IMR-90 (cell line): ENCODE measurements at regions of chr5 and their contacts with region 1.

Region 1: DNA sequence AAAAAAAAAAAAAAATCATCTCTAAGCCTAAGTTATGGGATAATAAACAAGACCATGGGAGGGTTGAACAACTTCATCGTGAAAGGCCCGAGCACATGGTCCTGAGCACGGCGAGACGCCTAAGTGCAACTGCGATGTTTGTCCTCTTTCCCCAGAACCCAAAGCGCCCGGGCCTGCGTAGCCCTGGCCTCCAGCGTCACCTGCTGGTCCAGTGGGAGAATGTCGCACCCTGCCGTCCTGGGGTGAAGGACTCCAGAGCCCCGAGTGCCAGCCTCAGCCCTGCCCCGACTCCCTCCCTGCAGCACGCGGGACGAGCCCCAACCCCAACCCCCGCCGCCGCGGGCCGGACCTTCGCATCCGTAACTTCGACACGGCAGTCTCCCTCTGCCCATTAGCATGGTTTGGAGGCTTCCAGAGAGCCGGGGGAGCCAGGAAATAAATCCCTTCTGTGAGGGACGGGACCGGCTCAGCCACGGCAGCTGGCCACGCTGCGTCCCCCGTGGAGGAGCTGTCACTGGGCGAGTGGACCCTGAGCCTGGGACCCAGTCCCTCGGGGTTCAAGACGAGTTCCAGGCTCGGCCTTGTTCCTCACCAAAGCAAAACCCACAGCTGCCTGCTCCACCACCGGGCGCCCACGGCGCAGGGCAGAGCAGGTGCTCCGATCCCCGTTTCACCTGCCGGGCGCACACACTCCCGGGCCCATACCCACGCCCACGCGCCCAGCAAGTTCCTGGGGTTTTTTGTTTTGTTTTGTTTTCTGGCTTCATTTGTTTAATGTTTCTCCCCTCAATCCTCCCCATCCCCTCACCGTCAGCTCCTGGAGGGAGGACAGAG is 132.5 kb upstream of the HAND1 start:
- DNase-seq: peak; percentile 59
- ATAC-seq: peak; percentile 99
- H3K4me3 ChIP-seq: peak overlapping the region; percentile 4; the same call in 1 of the 2 replicates
- H3K27ac ChIP-seq: no peak overlapping the region
- H3K4me1 ChIP-seq: peaks cover 3% of the 10 kb centered on the region; the same call in 1 of the 2 replicates
- H3K27me3 ChIP-seq: peaks cover 60% of the 10 kb centered on the region
- CTCF ChIP-seq: peak; percentile 96
- POLR2A ChIP-seq: peak; percentile 39; the same call in 1 of the 2 replicates
- RAD21 ChIP-seq: peak; percentile 99

Region 2: DNA sequence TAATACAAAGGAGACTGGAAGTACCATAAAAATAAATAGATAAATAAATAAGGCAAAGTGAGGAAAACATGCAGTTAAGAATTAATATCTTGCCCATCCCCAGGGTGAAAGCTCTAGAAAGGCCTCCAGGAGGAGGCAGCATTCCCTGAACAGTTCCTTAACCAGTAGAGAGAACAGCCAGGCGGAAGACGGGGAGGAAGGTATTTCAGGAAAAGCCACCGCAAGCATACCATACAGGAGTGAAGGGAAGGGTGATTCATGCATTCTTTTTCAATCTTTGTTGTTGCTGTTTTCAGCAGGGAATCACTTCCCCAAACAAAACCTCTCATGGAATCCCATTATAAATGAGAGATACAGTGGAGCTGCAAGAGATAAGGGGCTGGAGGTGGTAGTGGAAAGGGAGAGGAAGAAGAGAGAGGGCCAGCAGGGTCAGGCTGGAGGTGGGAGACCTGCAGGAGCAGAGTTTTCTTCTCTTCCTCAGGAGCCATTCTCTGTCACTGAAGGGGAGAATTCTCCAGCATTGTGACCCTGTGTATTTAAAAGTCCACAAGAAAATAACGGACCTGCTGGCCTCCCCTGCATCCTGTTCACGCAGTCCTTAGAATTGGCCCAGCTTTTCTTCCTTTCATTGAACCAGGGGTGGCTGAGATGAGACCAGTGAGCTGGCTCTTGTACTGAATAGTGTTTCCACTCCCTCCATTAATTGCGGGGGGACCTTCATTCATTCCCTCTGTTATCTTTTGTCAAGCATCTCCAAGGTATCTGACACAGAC is 827.8 kb before region 1 on chr5:
- CTCF ChIA-PET with region 1: no interaction called
- POLR2A ChIA-PET with region 1: no interaction called
- dilution Hi-C with region 1: no loop called
- in situ Hi-C with region 1: no loop called
- intact Hi-C with region 1: no loop called
- DNase-seq: peak; percentile 6
- ATAC-seq: peak; percentile 35
- H3K4me3 ChIP-seq: no peak overlapping the region
- H3K27ac ChIP-seq: no peak overlapping the region
- H3K4me1 ChIP-seq: no peaks in the 10 kb centered on the region; the same call in 1 of the 2 replicates
- H3K27me3 ChIP-seq: no peaks in the 10 kb centered on the region
- CTCF ChIP-seq: 0 out of 2 replicates have a peak, but pooled peaks have one; percentile 21
- POLR2A ChIP-seq: no peak
- RAD21 ChIP-seq: no peak

Region 3: GRCh38 chr5:154467655-154468354 is 142.7 kb before region 1 on chr5:
- CTCF ChIA-PET with region 1: interaction called, 3 read pairs
- POLR2A ChIA-PET with region 1: no interaction called
- dilution Hi-C with region 1: no loop called
- in situ Hi-C with region 1: loop called (anchors 5 kb)
- intact Hi-C with region 1: loop called (anchors 1 kb)
- DNase-seq: peak; percentile 53
- ATAC-seq: peak; percentile 92
- H3K4me3 ChIP-seq: no peak overlapping the region
- H3K27ac ChIP-seq: no peak overlapping the region
- H3K4me1 ChIP-seq: peaks cover 2% of the 10 kb centered on the region; the same call in 1 of the 2 replicates
- H3K27me3 ChIP-seq: peaks cover 30% of the 10 kb centered on the region
- CTCF ChIP-seq: peak; percentile 85
- POLR2A ChIP-seq: no peak
- RAD21 ChIP-seq: peak; percentile 76

Region 4: GRCh38 chr5:154520861-154521453 is 89.6 kb before region 1 on chr5:
- CTCF ChIA-PET with region 1: no interaction called
- POLR2A ChIA-PET with region 1: no interaction called
- dilution Hi-C with region 1: no loop called
- in situ Hi-C with region 1: no loop called
- intact Hi-C with region 1: loop called (anchors 2 kb)
- DNase-seq: no peak
- ATAC-seq: no peak
- H3K4me3 ChIP-seq: no peak overlapping the region
- H3K27ac ChIP-seq: no peak overlapping the region
- H3K4me1 ChIP-seq: no peaks in the 10 kb centered on the region
- H3K27me3 ChIP-seq: peaks cover 56% of the 10 kb centered on the region
- CTCF ChIP-seq: peak; percentile 57
- POLR2A ChIP-seq: no peak
- RAD21 ChIP-seq: no peak; the same call in 1 of the 2 replicates